BJ (cell line): ENCODE measurements at regions of chr17 and their contacts with region 1.

Region 1: DNA sequence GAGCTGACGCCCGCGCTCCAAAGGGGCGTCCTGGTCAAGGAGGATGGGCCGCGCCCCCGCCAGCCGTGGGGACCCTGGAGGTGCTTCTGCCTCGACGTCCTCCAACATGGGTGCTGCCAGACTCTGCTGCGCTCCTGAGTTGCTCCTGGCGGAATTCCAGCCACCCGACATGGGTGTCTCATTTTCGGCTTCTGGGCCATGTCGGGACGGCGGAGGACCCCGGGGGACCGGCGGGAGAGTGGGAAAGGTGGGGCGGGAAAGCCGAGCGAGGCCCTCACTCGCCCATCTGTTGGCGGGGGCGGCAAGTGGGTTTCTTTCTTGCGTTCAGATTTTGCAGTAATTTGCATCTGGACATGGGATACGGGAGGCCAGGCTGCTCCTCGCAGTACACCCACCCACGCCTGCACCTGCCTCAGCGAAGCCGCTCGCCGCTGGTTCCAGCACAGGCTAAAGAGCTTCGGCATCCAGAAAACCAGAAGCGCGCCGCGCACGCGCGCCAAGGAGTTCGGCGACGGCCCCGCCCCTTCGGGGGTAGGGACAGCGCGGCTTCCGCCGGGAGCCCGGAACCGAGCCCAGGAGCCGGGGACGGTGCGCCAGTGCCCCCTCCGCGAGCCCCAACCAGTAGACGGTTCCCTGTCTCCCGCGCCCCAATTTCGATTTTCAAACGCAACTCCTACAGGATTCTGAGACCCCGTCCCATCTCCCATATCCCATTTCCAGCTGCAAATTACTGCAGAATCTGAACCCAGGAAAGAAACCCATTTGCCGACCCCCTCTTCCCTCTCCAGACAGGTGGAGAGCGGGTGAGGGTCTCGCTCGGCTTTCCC is at the start of gene ARMC7:
- DNase-seq: peak; percentile 38
- H3K4me3 ChIP-seq: peak within 1 kb of the TSS; percentile 90
- H3K27me3 ChIP-seq: no peaks in the 10 kb centered on the region
- CTCF ChIP-seq: no peak
- polyA plus RNA-seq, gene ARMC7: 5.7 and 6.9 TPM in 2 replicates

Region 2: GRCh38 chr17:74807925-74808324 is 301.7 kb before region 1 on chr17:
- CTCF ChIA-PET with region 1: no interaction called
- POLR2A ChIA-PET with region 1: no interaction called
- DNase-seq: no peak
- H3K4me3 ChIP-seq: no peak overlapping the region
- H3K27me3 ChIP-seq: no peaks in the 10 kb centered on the region
- CTCF ChIP-seq: no peak

Region 3: DNA sequence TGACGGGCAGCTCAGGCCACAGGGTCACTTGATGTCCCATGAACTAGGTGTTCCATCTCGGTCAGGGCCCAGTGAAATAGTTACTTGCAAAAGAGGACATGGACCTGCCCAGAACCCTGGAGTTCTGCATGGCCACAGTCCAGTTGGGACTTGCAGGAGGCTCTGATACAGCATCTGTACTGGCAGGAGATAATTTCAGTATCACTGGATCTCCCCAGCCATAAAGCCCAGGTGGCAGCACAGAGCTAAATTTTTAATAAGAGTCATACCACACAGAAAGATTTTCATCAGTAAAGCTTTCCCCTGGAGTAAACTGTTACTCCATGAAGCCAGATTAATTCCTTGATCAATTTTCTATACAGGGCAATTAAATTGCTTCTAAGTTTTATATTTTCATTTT is 39.8 kb before region 1 on chr17:
- CTCF ChIA-PET with region 1: interaction called, 60 read pairs
- POLR2A ChIA-PET with region 1: interaction called, 3 read pairs
- DNase-seq: no peak
- H3K4me3 ChIP-seq: no peak overlapping the region
- H3K27me3 ChIP-seq: no peaks in the 10 kb centered on the region
- CTCF ChIP-seq: peak; percentile 56

Region 4: GRCh38 chr17:75124041-75124818 is 14.6 kb after region 1 on chr17:
- CTCF ChIA-PET with region 1: interaction called, 78 read pairs
- POLR2A ChIA-PET with region 1: no interaction called
- DNase-seq: no peak
- H3K4me3 ChIP-seq: no peak overlapping the region
- H3K27me3 ChIP-seq: no peaks in the 10 kb centered on the region
- CTCF ChIP-seq: no peak

Region 5: DNA sequence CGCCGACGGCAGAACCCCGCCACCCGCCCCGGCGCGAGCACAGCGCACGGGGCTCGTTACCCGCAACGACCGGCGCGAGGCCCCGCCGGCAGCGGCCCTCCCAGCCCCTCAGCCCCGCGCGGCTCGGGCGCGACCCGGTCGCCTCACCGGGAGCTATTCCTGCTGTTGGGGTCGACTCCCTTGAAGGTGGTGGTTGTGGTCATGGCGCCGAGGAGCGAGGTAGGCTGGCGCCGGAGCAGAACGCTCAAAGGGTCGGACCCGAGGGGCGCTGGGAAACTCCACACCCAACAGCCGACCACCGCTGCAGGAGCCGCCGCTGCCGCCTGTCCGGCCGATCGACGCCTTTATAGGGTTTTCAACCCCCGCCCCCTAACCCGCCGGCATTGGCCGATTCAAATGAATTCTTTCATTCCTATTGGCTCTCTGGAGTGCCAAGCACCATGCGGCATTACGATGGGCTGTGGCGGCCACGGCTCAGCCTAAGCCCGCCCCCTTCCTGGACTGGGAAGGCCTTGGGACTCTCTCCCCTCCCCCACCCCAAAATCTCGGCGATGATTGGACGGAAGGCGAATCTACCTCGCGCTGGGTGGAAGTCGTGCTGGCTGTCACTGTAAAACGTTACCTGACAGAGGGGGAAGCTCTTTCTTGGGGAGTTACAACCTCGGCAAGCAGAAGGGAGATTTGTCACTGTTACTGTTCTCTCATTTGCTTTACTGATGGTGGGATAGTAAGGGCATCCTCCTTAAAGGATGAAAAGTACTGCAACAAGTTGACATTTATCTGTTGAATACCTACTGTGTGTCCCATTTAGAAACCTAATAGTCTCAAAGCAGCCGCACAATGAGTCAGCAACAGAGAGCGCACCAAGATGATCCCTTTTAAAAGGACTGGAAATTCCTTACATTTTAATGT is 44.8 kb after region 1 on chr17 and contains the start of gene JPT1:
- CTCF ChIA-PET with region 1: interaction called, 10 read pairs
- POLR2A ChIA-PET with region 1: no interaction called
- DNase-seq: peak; percentile 92
- H3K4me3 ChIP-seq: peak within 1 kb of the TSS; percentile 68
- H3K27me3 ChIP-seq: no peaks in the 10 kb centered on the region
- CTCF ChIP-seq: no peak
- polyA plus RNA-seq, gene JPT1: 65.5 and 111 TPM in 2 replicates

Region 6: GRCh38 chr17:75205037-75205792 is 95.6 kb after region 1 on chr17 and contains the start of gene NUP85:
- CTCF ChIA-PET with region 1: interaction called, 77 read pairs
- POLR2A ChIA-PET with region 1: no interaction called
- DNase-seq: peak; percentile 56
- H3K4me3 ChIP-seq: peak within 1 kb of the TSS; percentile 90
- H3K27me3 ChIP-seq: no peaks in the 10 kb centered on the region
- CTCF ChIP-seq: no peak
- polyA plus RNA-seq, gene NUP85: 45.4 and 74.1 TPM in 2 replicates

Region 7: GRCh38 chr17:75456417-75457046 is 346.9 kb after region 1 on chr17 and contains the start of gene TMEM94:
- CTCF ChIA-PET with region 1: no interaction called
- POLR2A ChIA-PET with region 1: no interaction called
- DNase-seq: peak; percentile 81
- H3K4me3 ChIP-seq: peak within 1 kb of the TSS; percentile 93
- H3K27me3 ChIP-seq: no peaks in the 10 kb centered on the region
- CTCF ChIP-seq: no peak
- polyA plus RNA-seq, gene TMEM94: 14.0 and 35.5 TPM in 2 replicates